Spleen (tissue), 13 donors: ENCODE measurements at regions of chr9 and their contacts with region 1.

Region 1: DNA sequence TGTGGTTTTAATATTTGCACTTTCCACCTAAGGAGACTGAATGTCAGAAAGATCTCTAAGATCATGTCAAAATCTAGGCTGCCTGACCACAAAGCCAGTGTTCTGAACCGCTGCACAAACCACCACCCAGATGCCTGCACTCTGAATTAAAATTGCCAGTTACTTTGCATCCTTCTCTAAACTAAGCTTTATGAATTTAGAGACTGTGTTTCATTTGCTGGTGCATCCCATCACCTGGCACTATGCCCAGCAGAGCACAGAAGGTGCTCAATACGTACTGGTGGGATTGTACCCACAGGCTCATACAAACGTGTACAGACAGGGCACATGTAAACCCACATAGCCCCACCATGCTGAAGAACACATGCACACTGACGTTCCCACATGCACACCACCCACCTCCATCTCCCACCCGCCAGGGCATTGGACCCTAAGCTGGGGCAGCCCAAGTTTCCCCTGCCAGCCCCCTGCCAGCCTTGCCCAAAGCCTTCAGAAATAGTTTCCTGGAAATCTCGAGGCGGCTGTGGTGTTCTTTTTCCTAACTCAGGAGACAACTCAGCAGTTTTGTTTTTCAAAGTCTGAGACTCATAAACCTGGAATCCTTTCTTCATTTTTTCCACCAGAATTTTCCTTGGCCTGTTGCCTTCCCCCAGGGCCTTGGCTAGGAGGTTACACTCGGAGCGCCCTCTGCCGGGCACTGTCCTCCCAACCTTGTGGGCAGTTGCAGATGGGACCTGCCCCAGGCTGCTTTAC is 9.6 kb upstream of the TRAF1 start:
- DNase-seq: peak; percentile 97
- H3K4me3 ChIP-seq: peak overlapping the region in 1 of 8 donors; percentile 17
- H3K27ac ChIP-seq: peak overlapping the region; percentile 29 to 96 (median 94)
- H3K4me1 ChIP-seq: peaks cover 50 to 65% (median 61%) of the 10 kb centered on the region in 6 donors
- H3K27me3 ChIP-seq: no peaks in the 10 kb centered on the region
- CTCF ChIP-seq: peak; percentile 80 to 97 (median 93)
- POLR2A ChIP-seq: no peak

Region 2: DNA sequence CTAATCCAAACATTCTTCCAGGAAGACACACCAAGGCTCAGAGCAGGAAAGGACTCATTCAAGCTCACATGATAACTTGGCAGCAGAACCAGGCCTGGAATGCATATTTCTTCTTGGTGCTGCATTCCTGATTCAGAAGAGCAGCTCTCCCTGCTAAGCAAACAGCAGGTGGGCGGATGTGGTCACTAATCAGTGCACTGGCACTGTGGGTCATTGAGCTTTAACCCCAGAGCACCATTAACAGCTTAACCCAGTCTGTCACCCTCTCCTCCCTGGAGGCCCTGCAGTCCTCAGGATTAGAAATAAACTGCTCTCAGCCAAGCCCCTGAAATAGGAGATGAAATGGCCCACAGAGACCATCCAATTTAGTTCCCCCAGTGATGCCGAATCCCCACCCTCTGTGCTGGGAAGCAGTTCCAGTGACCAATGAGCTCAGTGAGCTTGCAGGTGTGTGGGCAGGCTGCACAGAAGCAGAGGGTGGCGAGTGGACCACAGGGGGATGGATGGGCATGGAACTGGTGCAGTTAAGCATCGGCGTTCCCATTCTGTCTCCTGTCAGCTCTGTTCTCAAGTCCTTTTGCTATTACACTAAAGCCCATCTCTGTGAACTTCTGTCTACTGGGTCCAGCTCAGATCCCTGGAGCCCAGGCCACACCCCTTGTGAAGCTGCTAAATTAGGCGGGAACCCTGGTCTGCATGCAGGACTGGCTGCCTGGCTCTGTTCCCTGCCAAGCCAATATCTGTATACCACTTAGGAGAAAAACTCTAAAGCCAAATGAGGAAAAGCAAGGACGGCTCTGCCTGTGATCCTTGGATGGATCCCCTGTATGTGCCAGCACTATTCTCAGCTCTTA is 205.3 kb before region 1 on chr9:
- intact Hi-C with region 1: no loop called
- DNase-seq: no peak
- H3K4me3 ChIP-seq: no peak overlapping the region
- H3K27ac ChIP-seq: peak overlapping the region in 2 of 8 donors; percentile 6 to 97
- H3K4me1 ChIP-seq: peaks cover 0 to 64% (median 19%) of the 10 kb centered on the region in 6 donors
- H3K27me3 ChIP-seq: no peaks in the 10 kb centered on the region
- CTCF ChIP-seq: no peak
- POLR2A ChIP-seq: no peak

Region 3: GRCh38 chr9:120755827-120756434 is 180.3 kb before region 1 on chr9:
- intact Hi-C with region 1: loop called (anchors 10 kb)
- DNase-seq: no peak
- H3K4me3 ChIP-seq: no peak overlapping the region
- H3K27ac ChIP-seq: peak overlapping the region in 5 of 8 donors; percentile 56 to 79 (median 78)
- H3K4me1 ChIP-seq: peaks cover 14 to 50% (median 27%) of the 10 kb centered on the region in 6 donors
- H3K27me3 ChIP-seq: no peaks in the 10 kb centered on the region
- CTCF ChIP-seq: peak; percentile 82 to 97 (median 94)
- POLR2A ChIP-seq: no peak

Region 4: DNA sequence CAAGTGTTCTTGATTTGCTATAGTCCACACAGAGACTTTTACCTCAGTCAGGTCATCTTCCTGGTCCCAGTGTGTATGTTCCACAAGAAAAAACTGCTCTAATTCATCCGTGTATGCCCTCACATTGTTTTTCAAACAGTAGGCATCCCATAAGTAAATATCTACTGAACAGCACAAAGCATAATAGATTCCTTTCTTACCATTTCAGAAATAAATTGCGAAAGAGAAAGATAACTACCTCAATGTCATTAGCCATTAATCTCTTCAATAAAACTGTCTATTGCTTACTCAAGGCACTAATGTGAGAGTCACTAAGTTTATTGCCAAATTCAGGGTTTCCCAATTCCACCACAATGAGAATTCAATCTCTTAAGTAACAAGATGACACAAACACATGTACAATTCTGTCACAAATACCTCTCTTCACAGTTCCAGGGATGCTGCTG is 152.6 kb before region 1 on chr9:
- intact Hi-C with region 1: loop called (anchors 10 kb)
- DNase-seq: no peak
- H3K4me3 ChIP-seq: peak overlapping the region in 1 of 8 donors; percentile 21
- H3K27ac ChIP-seq: peak overlapping the region in 6 of 8 donors; percentile 43 to 82 (median 68)
- H3K4me1 ChIP-seq: peaks cover 5 to 94% (median 52%) of the 10 kb centered on the region in 6 donors
- H3K27me3 ChIP-seq: no peaks in the 10 kb centered on the region
- CTCF ChIP-seq: no peak
- POLR2A ChIP-seq: no peak

Region 5: DNA sequence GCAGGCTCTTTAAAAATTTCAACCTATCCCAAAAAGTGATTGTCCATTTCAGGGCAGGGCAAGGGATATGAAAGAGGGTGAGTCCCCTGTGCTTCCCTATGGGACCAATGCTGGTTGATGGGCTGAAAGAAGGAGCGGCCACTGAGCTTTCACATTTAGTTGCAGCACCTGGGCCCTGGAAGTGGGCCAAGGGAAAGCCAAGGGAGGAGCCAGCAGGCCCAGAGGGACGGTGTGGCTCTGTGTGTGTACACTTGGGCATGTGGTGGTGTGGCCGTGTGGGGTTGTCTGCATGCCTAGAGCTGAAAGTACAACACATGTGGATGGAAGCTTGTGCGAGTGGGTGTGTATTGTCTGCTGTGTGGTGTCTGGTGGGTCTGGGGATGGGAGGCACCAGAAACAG is 79.5 kb before region 1 on chr9:
- intact Hi-C with region 1: no loop called
- DNase-seq: no peak
- H3K4me3 ChIP-seq: no peak overlapping the region
- H3K27ac ChIP-seq: peak overlapping the region in 5 of 8 donors; percentile 39 to 74 (median 65)
- H3K4me1 ChIP-seq: peaks cover 0 to 37% (median 11%) of the 10 kb centered on the region in 6 donors
- H3K27me3 ChIP-seq: no peaks in the 10 kb centered on the region
- CTCF ChIP-seq: no peak
- POLR2A ChIP-seq: no peak

Region 6: GRCh38 chr9:120873531-120873930 is 62.7 kb before region 1 on chr9:
- intact Hi-C with region 1: loop called (anchors 5 kb)
- DNase-seq: peak; percentile 68
- H3K4me3 ChIP-seq: no peak overlapping the region
- H3K27ac ChIP-seq: peak overlapping the region in 4 of 8 donors; percentile 19 to 98 (median 63)
- H3K4me1 ChIP-seq: peaks cover 15 to 68% (median 38%) of the 10 kb centered on the region in 6 donors
- H3K27me3 ChIP-seq: no peaks in the 10 kb centered on the region
- CTCF ChIP-seq: no peak
- POLR2A ChIP-seq: no peak

Region 7: GRCh38 chr9:122036988-122037387 is 1100.8 kb after region 1 on chr9:
- intact Hi-C with region 1: no loop called
- DNase-seq: no peak
- H3K4me3 ChIP-seq: no peak overlapping the region
- H3K27ac ChIP-seq: no peak overlapping the region
- H3K4me1 ChIP-seq: peaks cover 0 to 17% (median 5%) of the 10 kb centered on the region in 6 donors
- H3K27me3 ChIP-seq: no peaks in the 10 kb centered on the region
- CTCF ChIP-seq: no peak
- POLR2A ChIP-seq: no peak